Activated CD8-positive, alpha-beta memory T cell treated with anti-CD3 and anti-CD28 coated beads, Interleukin-2, amount 10 ng/mL, durations not matched to agents 7 days and 5 days (primary cell): ENCODE measurements at regions of chr1 and their contacts with region 1.

Region 1: GRCh38 chr1:154442006-154442740 is 37.0 kb downstream of the IL6R start:
- DNase-seq: no peak
- ATAC-seq: no peak
- H3K4me3 Mint-ChIP-seq: no peak overlapping the region
- H3K27ac Mint-ChIP-seq: no peak overlapping the region
- H3K4me1 Mint-ChIP-seq: peaks cover 49% of the 10 kb centered on the region
- H3K27me3 Mint-ChIP-seq: peaks cover 61% of the 10 kb centered on the region

Region 2: DNA sequence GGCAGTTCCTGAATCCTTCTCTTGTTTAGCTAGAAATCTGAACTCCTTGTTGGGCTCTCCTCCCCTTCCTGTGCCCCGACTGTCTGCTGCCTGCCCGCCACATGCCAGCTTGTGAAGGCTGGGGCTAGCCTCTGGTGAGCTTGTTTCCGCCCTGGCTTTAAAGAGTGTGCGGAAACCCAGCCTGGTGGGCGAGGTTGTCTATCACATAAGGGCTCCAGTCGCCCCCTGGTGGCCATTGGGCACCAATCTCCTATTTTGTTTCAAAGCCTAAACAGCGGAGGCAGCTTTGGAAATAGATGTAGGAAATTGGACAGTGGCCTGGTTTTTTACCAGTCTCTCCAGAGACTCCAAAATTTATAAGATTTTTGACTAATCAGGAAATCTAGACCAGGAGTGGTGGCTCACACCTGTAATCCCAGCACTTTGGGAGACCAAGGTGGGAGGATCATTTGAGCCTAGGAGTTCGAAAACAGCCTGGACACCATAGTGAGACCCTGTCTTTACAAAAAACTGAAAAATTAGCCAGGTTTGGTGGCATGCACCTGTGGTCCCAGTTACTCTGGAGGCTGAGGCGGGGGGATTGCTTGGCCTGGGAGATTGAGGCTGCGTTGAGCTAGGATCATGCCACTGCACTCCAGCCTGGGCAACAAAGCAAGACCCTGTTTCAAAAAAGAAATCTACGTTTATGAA is 107.0 kb before region 1 on chr1:
- CTCF ChIA-PET with region 1: interaction called, 11 read pairs
- DNase-seq: peak; percentile 95
- ATAC-seq: peak; percentile 90
- H3K4me3 Mint-ChIP-seq: peak overlapping the region; percentile 12
- H3K27ac Mint-ChIP-seq: peak overlapping the region; percentile 78
- H3K4me1 Mint-ChIP-seq: peaks cover 57% of the 10 kb centered on the region
- H3K27me3 Mint-ChIP-seq: no peaks in the 10 kb centered on the region

Region 3: GRCh38 chr1:154431586-154432373 is 10.4 kb before region 1 on chr1:
- CTCF ChIA-PET with region 1: interaction called, 14 read pairs
- DNase-seq: peak; percentile 58
- ATAC-seq: peak; percentile 79
- H3K4me3 Mint-ChIP-seq: no peak overlapping the region
- H3K27ac Mint-ChIP-seq: no peak overlapping the region
- H3K4me1 Mint-ChIP-seq: peaks cover 23% of the 10 kb centered on the region
- H3K27me3 Mint-ChIP-seq: no peaks in the 10 kb centered on the region